Transverse colon (tissue), 4 donors: ENCODE measurements at regions of chr17 and their contacts with region 1.

Region 1: GRCh38 chr17:7851438-7852256 is 3.2 kb upstream of the TMEM88 start:
- DNase-seq: peak; percentile 96
- H3K4me3 ChIP-seq: peak overlapping the region in 2 of 4 donors; percentile 6
- H3K27ac ChIP-seq: peak overlapping the region; percentile 21 to 64 (median 50)
- H3K4me1 ChIP-seq: peaks cover 20 to 35% (median 27%) of the 10 kb centered on the region in 4 donors
- H3K27me3 ChIP-seq: no peaks in the 10 kb centered on the region
- CTCF ChIP-seq: peak; percentile 98 to 100 (median 98)
- EP300 ChIP-seq: no peak
- POLR2A ChIP-seq: no peak

Region 2: DNA sequence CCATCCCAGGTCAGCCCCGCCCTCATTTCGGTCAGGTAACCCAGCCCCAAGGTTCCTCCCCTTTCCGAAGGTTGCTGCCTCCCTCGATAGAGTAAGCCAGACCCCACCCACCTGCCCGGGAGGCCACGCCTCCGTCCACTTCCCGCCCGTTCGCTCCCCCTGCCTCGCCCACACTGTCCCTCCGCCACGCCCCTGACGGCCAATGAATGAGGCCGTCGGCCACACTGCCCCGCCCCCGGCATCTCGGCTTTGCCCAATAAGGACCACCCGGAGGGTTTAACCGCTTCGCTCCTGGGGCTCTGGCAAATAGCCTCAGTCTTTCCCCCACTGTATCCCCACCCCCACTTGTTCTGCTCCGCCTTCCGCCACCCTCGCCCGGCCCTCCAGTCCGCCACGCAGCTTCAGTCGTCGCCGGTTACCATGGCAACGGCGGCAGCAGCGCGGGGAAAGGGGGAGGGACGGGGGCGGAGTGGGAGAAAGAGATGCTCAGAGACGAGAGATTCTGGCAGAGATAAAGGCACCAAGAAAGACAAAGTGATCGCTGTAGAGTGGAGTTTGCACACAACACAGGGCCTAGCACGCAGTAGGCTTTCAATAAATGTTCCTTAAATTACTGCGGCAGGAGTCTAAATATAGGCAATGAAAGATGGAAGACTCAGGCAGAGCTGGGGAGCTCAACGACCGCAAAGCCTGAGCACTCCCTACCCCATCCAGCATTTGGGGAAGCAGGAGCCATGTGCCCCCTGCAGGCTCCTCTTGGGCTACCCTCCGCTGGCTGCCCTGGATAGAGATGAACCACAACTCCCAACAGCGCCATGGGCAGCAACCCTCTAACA is 637.1 kb before region 1 on chr17:
- in situ Hi-C with region 1: no loop called
- intact Hi-C with region 1: no loop called
- DNase-seq: peak; percentile 99
- H3K4me3 ChIP-seq: peak overlapping the region; percentile 13 to 59 (median 29)
- H3K27ac ChIP-seq: peak overlapping the region; percentile 79 to 100 (median 92)
- H3K4me1 ChIP-seq: peaks cover 26 to 56% (median 49%) of the 10 kb centered on the region in 4 donors
- H3K27me3 ChIP-seq: no peaks in the 10 kb centered on the region
- CTCF ChIP-seq: peak; percentile 27 to 61 (median 46)
- EP300 ChIP-seq: no peak
- POLR2A ChIP-seq: no peak

Region 3: GRCh38 chr17:7650509-7651096 is 201.0 kb before region 1 on chr17 and contains the start of gene ATP1B2:
- in situ Hi-C with region 1: no loop called
- intact Hi-C with region 1: no loop called
- DNase-seq: peak; percentile 75
- H3K4me3 ChIP-seq: peak within 1 kb of the TSS; percentile 18 to 68 (median 38)
- H3K27ac ChIP-seq: peak within 1 kb of the TSS; percentile 5 to 64 (median 48)
- H3K4me1 ChIP-seq: peaks cover 4 to 23% (median 19%) of the 10 kb centered on the region in 4 donors
- H3K27me3 ChIP-seq: peaks cover 51% of the 10 kb centered on the region
- CTCF ChIP-seq: no peak
- EP300 ChIP-seq: no peak
- POLR2A ChIP-seq: no peak
- total RNA-seq, gene ATP1B2: 0.40 to 20.6 (median 2.3) TPM

Region 4: GRCh38 chr17:7716901-7717755 is 134.5 kb before region 1 on chr17 and contains the start of gene DNAH2:
- in situ Hi-C with region 1: no loop called
- intact Hi-C with region 1: no loop called
- DNase-seq: peak; percentile 78
- H3K4me3 ChIP-seq: peak within 1 kb of the TSS; percentile 33 to 46 (median 42)
- H3K27ac ChIP-seq: peak within 1 kb of the TSS; percentile 8 to 68 (median 35)
- H3K4me1 ChIP-seq: peaks cover 9 to 23% (median 18%) of the 10 kb centered on the region in 4 donors
- H3K27me3 ChIP-seq: peaks cover 60% of the 10 kb centered on the region
- CTCF ChIP-seq: peak; percentile 17 to 39 (median 33)
- EP300 ChIP-seq: no peak
- POLR2A ChIP-seq: no peak
- total RNA-seq, gene DNAH2: under 0.01 to 0.55 (median 0.18) TPM

Region 5: GRCh38 chr17:7818746-7819645 is 32.7 kb before region 1 on chr17:
- in situ Hi-C with region 1: no loop called
- intact Hi-C with region 1: loop called (anchors 1 kb)
- DNase-seq: no peak
- H3K4me3 ChIP-seq: no peak overlapping the region
- H3K27ac ChIP-seq: no peak overlapping the region
- H3K4me1 ChIP-seq: no peaks in the 10 kb centered on the region
- H3K27me3 ChIP-seq: no peaks in the 10 kb centered on the region
- CTCF ChIP-seq: no peak
- EP300 ChIP-seq: no peak
- POLR2A ChIP-seq: no peak